Activated CD4-positive, alpha-beta T cell treated with anti-CD3 and anti-CD28 coated beads, Interleukin-2, amount 10 ng/mL, durations not matched to agents 24 days and 14 days (primary cell): ENCODE measurements at regions of chr2 and their contacts with region 1.

Region 1: GRCh38 chr2:37365669-37366068 is 21.2 kb downstream of the QPCT start:
- DNase-seq: peak; percentile 61
- H3K4me3 Mint-ChIP-seq: no peak overlapping the region
- H3K27ac Mint-ChIP-seq: no peak overlapping the region
- H3K4me1 Mint-ChIP-seq: peaks cover 13% of the 10 kb centered on the region
- H3K27me3 Mint-ChIP-seq: peaks cover 33% of the 10 kb centered on the region

Region 2: DNA sequence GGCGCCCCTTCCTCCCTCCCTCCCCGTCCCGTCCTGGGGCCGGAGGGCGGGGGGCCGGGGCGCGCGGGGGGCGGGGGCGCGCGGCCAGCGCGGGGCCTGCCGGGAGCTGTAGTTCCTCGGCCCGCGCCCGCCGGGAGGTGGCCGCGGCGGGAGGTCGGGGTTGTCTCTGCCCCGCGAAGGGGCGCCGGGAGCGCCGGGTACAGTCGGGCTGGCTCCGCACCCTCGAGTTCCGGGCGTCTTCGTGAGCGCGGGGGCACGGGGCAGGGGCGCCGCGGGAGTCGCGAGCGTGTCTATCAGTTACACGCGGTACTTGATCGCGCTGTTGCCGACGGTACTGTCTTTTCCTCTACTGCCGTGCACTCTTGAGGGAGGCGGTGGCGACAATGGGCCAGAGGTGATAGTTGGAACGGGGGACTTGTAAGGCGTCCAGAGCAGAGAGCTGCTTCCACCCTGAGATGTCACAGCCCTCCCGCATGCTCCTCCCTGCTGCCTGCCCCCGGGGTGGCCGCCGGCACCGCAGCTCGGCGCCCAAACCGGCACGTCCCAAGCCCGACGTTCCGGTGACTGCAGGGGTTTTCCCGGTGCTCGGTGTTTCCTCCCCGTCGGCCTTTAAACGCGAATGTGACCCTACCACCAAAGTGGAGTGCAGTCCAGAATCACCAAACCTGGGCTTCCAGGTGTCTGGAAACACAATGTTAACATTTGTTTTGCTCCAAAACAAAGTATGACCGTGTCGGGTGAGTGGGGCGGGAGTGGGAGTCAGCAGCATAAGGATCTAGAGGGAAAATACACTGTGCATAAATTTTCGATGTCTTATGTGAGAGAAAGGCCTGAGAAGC is 40.7 kb before region 1 on chr2 and contains the start of gene PRKD3:
- intact Hi-C with region 1: loop called (anchors 2 kb)
- DNase-seq: peak; percentile 89
- H3K4me3 Mint-ChIP-seq: peak within 1 kb of the TSS; percentile 95
- H3K27ac Mint-ChIP-seq: peak within 1 kb of the TSS; percentile 92
- H3K4me1 Mint-ChIP-seq: peaks cover 27% of the 10 kb centered on the region
- H3K27me3 Mint-ChIP-seq: peaks cover 48% of the 10 kb centered on the region
- total RNA-seq, gene PRKD3: 20.2 and 21.9 TPM in 2 replicates

Region 3: DNA sequence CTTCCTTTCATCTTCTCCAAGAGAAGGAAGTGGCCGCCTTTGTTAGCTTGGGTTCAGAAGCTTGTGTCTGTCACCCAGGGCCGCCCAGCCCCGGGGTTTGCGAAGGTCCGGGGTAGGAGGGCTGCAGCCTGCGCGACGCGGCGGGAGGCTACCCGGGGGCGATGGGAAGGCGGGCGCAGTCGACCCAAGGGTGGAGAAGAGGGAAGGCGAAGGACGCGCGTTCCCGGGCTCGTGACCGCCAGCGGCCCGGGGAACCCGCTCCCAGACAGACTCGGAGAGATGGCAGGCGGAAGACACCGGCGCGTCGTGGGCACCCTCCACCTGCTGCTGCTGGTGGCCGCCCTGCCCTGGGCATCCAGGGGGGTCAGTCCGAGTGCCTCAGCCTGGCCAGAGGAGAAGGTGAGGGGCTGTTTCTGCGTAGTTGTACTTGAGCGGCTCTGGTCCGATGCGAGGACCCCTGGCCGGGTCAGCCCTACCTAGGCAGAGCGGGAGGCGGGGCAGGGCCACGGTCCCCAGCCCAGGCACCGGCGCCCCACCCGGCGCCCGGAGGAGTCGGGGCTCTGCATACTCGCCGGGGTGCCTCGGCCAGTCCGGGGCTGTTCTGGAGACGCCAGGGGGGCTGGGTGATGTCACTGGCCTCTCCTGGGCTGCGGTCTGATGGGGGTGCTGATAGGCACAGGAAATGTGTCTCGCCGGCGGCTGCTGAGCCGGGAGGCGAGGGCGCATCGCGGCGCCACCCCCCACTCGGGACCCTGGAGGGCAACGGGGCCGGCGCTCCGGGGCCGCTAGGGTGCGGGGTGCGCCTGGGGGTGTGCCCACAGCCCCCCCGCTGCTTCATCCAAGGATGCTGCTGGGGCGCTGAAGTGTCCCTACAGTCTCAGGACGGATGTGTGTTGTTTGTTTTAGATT is 21.0 kb before region 1 on chr2 and contains the start of gene QPCT:
- intact Hi-C with region 1: loop called (anchors 2 kb)
- DNase-seq: peak; percentile 79
- H3K4me3 Mint-ChIP-seq: peak within 1 kb of the TSS; percentile 83
- H3K27ac Mint-ChIP-seq: no peak within 1 kb of the TSS
- H3K4me1 Mint-ChIP-seq: peaks cover 22% of the 10 kb centered on the region
- H3K27me3 Mint-ChIP-seq: peaks cover 82% of the 10 kb centered on the region
- total RNA-seq, gene QPCT: 2.0 and 2.1 TPM in 2 replicates